Head of caudate nucleus (tissue), 42 donors: ENCODE measurements at regions of chr6 and their contacts with region 1.

Region 1: DNA sequence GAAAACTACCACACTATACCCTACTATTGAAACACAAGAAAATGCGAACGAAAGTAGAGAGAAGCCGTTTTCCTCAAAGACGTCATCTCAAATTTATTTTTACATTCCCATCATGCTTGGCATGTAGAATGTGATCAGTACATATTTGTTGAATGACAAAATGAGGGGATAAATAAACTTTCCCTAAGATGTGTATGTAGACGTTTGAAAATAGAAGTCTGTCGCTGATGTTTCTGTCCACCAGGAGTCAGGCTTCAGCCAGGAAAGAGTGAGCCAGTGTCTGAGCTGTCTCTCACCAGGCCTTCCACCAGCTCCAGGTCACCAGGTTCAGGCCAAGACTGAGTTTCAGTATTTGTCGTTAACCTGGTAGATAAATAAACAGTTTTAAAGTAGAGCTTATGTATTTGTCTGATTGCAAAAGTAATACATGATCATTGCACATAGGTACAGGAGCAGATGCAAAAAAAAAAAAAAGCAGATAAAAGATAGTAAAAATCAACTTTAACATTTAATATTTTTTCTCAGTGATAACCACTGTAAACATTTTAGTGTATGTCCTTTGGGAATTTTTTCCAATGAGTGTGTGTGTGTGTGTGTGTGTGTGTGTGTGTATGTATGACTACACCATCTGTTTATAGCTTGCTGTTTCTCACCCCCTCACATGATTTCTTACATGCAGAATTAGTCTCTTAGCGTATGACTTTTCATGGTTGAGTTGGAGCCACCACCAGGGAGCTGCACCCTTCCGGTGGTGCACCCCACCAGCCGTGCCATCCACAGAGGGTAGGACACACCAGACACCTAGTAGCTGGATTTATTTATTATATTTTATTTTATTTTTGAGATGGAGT is 26.2 kb downstream of the WRNIP1 start:
- DNase-seq: peak in 39 of 42 donors; percentile 34 to 90 (median 69)

Region 2: DNA sequence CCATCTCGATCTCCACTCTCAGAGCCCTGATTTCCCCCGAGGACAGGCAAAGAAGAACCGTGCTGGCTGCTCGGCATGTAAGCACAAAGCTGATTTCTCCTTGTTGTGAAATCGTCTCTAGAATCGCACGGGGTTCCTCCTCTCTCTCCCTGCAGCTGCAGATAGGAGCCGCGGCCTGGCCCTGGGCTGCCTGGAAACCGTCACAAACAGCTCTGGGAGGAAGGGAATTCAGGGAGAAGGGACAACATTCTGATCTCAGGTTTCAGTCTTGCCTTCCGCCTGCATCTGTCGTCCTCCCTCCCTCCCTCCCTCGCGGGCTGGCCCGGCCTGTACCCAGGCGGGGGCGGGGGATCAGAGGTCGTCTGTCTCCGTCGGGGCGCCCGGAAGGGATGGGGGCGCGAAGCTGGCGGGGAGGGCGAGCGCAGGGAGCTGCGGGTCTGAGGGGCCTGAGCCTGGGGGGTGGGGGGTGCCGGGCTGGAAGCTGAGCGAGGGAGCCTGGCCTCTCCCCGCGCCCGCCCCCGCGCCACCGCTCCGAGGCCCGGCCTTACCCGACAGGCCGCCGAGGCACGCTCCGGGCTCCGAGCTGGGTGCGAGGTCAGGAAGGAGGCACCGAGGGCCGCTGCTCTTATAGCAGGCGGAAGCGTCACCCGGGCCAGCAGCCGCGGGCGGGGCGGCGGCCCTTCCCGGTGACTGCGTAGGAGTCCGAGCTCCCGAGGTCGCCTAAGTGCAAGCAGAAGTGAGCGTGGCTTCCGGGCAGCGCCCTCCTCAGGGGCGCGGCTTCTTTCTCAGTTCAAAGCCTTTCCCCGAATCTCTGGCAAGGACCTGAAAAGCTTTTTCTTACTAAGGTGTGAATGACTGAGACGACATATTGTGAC is 50.2 kb after region 1 on chr6 and contains the start of gene SERPINB1:
- intact Hi-C with region 1: loop called (anchors 10 kb)
- DNase-seq: peak; percentile 44 to 89 (median 73)

Region 3: DNA sequence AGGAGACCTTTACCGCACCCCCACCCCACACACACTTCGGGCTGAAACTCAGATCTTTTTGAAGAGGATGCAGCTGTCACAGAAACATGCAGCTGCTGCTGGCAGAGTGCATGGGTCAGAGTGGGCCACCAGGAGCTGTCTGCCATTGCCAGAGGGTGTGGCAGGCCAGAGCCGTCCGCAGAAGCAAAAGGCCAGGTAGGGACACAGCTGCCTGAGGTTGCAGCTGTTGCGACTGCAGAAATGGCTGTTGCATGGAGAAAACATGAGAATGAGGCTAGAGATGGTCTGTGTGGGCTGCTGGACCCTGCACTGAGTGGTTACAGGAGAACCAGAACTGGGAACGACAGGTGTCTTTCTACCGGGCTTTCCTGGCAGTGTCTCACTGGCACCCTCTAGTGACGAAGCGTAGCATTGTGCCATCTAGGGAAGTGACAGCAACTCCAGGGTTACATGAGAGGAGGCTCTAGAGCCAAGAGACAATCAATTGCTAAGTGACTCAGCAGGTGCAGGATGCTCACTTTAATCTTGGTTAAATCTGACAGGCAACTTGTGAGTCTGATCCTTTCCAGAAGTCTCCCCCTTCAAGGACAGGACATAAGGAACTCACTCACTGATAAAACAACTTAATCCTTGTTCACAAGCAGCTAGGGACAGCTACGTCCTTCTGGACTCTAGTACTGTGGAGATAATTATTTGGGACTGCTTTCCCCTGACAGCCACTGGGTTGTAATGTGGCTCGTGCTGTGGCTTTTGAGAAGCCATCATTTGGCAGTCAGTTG is 140.8 kb after region 1 on chr6:
- intact Hi-C with region 1: loop called (anchors 10 kb)
- DNase-seq: peak; percentile 53 to 94 (median 87)